IMR-90 (cell line): ENCODE measurements at regions of chr20 and their contacts with region 1.

Region 1: GRCh38 chr20:32779500-32780211 is 17.5 kb downstream of the DNMT3B start:
- DNase-seq: no peak
- ATAC-seq: 0 out of 2 replicates have a peak, but pooled peaks have one; percentile 33
- H3K4me3 ChIP-seq: no peak overlapping the region
- H3K27ac ChIP-seq: no peak overlapping the region
- H3K4me1 ChIP-seq: no peaks in the 10 kb centered on the region
- H3K27me3 ChIP-seq: no peaks in the 10 kb centered on the region
- CTCF ChIP-seq: no peak
- POLR2A ChIP-seq: no peak
- RAD21 ChIP-seq: no peak

Region 2: DNA sequence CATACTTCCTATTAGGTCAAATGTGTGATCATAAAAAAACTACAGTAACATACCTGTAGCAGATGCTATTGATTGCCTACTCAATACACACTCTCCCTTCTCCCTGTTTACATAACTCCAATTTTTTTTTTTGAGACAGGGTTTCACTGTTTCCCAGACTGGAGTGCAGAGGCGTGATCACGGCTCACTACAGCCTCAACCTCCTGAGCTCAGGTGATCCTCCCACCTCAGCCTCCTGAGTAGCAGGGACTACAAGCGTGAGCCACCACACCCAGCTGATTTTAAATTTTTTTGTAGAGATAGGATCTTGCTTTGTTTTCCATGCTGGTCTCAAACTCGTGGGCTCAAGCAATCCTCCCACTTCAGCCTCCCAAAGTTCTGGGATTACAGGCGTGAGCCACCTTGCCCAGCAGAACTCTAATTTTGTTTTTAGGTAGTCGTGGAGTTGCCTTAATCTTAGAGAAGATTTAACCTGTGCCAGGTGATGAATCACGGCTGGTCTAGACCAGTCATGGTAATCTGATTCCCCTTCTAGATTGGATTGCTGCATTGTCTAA is 516.2 kb before region 1 on chr20:
- CTCF ChIA-PET with region 1: no interaction called
- POLR2A ChIA-PET with region 1: no interaction called
- dilution Hi-C with region 1: no loop called
- in situ Hi-C with region 1: no loop called
- intact Hi-C with region 1: no loop called
- DNase-seq: no peak
- ATAC-seq: no peak
- H3K4me3 ChIP-seq: no peak overlapping the region
- H3K27ac ChIP-seq: no peak overlapping the region
- H3K4me1 ChIP-seq: no peaks in the 10 kb centered on the region
- H3K27me3 ChIP-seq: no peaks in the 10 kb centered on the region; the same call in 1 of the 2 replicates
- CTCF ChIP-seq: no peak
- POLR2A ChIP-seq: no peak
- RAD21 ChIP-seq: no peak

Region 3: GRCh38 chr20:32509639-32510066 is 270.0 kb before region 1 on chr20:
- CTCF ChIA-PET with region 1: no interaction called
- POLR2A ChIA-PET with region 1: no interaction called
- dilution Hi-C with region 1: no loop called
- in situ Hi-C with region 1: loop called (anchors 10 kb)
- intact Hi-C with region 1: no loop called
- DNase-seq: peak; percentile 54
- ATAC-seq: peak; percentile 70
- H3K4me3 ChIP-seq: no peak overlapping the region
- H3K27ac ChIP-seq: no peak overlapping the region
- H3K4me1 ChIP-seq: peaks cover 4% of the 10 kb centered on the region; the same call in 1 of the 2 replicates
- H3K27me3 ChIP-seq: no peaks in the 10 kb centered on the region
- CTCF ChIP-seq: peak; percentile 34
- POLR2A ChIP-seq: no peak
- RAD21 ChIP-seq: peak; percentile 34; the same call in 1 of the 2 replicates

Region 4: GRCh38 chr20:32521780-32522525 is 257.7 kb before region 1 on chr20:
- CTCF ChIA-PET with region 1: interaction called, 3 read pairs
- POLR2A ChIA-PET with region 1: no interaction called
- dilution Hi-C with region 1: no loop called
- in situ Hi-C with region 1: loop called (anchors 10 kb)
- intact Hi-C with region 1: loop called (anchors 5 kb)
- DNase-seq: peak; percentile 49
- ATAC-seq: peak; percentile 94
- H3K4me3 ChIP-seq: no peak overlapping the region
- H3K27ac ChIP-seq: no peak overlapping the region
- H3K4me1 ChIP-seq: peaks cover 4% of the 10 kb centered on the region; the same call in 1 of the 2 replicates
- H3K27me3 ChIP-seq: peaks cover 4% of the 10 kb centered on the region; the same call in 1 of the 2 replicates
- CTCF ChIP-seq: peak; percentile 95
- POLR2A ChIP-seq: peak; percentile 58
- RAD21 ChIP-seq: peak; percentile 100

Region 5: GRCh38 chr20:32664678-32665159 is 114.9 kb before region 1 on chr20:
- CTCF ChIA-PET with region 1: no interaction called
- POLR2A ChIA-PET with region 1: no interaction called
- dilution Hi-C with region 1: no loop called
- in situ Hi-C with region 1: loop called (anchors 5 kb)
- intact Hi-C with region 1: no loop called
- DNase-seq: no peak
- ATAC-seq: peak; percentile 13; the same call in 1 of the 2 replicates
- H3K4me3 ChIP-seq: no peak overlapping the region
- H3K27ac ChIP-seq: no peak overlapping the region
- H3K4me1 ChIP-seq: no peaks in the 10 kb centered on the region
- H3K27me3 ChIP-seq: no peaks in the 10 kb centered on the region; the same call in 1 of the 2 replicates
- CTCF ChIP-seq: no peak
- POLR2A ChIP-seq: no peak
- RAD21 ChIP-seq: no peak

Region 6: DNA sequence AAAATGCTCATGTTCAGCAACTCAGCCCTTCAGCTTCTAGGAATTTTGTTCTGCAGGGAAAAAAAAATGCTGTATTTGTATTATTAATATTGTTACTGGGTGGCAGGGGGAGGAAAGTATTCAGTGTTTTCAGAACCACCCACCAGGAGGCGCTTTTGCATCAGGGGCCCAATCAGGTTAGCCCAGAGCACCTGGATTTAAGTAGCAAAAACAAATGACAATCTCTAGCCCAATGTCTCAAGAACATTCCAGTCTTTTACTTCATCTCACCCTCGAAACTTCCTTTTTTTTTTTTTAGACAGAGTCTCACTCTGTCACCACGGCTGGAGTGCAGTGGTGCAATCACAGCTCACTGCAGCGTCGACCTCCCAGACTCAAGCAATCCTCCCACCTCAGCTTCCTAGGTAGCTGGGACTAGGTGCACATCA is 105.3 kb before region 1 on chr20:
- CTCF ChIA-PET with region 1: interaction called, 19 read pairs
- POLR2A ChIA-PET with region 1: no interaction called
- dilution Hi-C with region 1: no loop called
- in situ Hi-C with region 1: loop called (anchors 5 kb)
- intact Hi-C with region 1: loop called (anchors 1 kb)
- DNase-seq: peak; percentile 50
- ATAC-seq: peak; percentile 78
- H3K4me3 ChIP-seq: no peak overlapping the region
- H3K27ac ChIP-seq: no peak overlapping the region
- H3K4me1 ChIP-seq: no peaks in the 10 kb centered on the region
- H3K27me3 ChIP-seq: peaks cover 2% of the 10 kb centered on the region; the same call in 1 of the 2 replicates
- CTCF ChIP-seq: peak; percentile 88
- POLR2A ChIP-seq: 0 out of 2 replicates have a peak, but pooled peaks have one; percentile 38
- RAD21 ChIP-seq: peak; percentile 96